ENCODE measurements at regions of chr20 and their contacts with region 1.

Region 1: DNA sequence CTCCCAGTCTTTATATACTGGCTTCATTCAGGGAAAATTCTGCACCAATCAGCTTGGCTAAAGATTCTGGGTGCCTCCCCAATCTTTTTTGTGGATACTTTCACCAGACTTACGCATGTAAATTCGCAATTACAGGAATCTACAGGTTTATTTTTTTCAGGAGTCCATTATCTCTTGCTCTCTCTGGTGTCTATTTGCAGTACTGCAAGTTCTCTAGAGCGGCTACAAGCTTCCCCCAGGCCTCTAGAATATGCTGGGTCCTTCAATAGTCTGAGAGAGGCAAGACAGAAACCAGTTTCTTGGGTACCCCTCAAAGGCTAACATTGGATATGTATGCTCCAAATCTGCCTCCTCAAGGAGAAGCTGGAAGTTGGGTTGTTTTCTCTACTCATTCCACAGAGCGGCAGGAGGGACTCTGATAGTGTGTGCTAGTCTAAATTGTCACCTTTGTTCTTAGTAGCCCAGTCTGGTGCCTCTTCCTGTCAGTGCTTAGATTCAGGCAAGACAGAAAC is 58.5 kb downstream of the SUN5 start:
- DNase-seq: peak; percentile 59
- ATAC-seq: peak; percentile 95
- H3K4me3 Mint-ChIP-seq: peak overlapping the region; percentile 37
- H3K27ac Mint-ChIP-seq: peak overlapping the region; percentile 86
- H3K4me1 Mint-ChIP-seq: peaks cover 31% of the 10 kb centered on the region
- H3K27me3 Mint-ChIP-seq: no peaks in the 10 kb centered on the region

Region 2: GRCh38 chr20:32789896-32790750 is 155.6 kb before region 1 on chr20:
- CTCF ChIA-PET with region 1: interaction called, 15 read pairs
- POLR2A ChIA-PET with region 1: no interaction called
- DNase-seq: peak; percentile 79
- ATAC-seq: peak; percentile 80
- H3K4me3 Mint-ChIP-seq: no peak overlapping the region
- H3K27ac Mint-ChIP-seq: no peak overlapping the region
- H3K4me1 Mint-ChIP-seq: peaks cover 24% of the 10 kb centered on the region
- H3K27me3 Mint-ChIP-seq: no peaks in the 10 kb centered on the region

Region 3: GRCh38 chr20:32902456-32903420 is 43.0 kb before region 1 on chr20:
- CTCF ChIA-PET with region 1: interaction called, 41 read pairs
- POLR2A ChIA-PET with region 1: no interaction called
- DNase-seq: peak; percentile 81
- ATAC-seq: peak; percentile 78
- H3K4me3 Mint-ChIP-seq: no peak overlapping the region
- H3K27ac Mint-ChIP-seq: peak overlapping the region; percentile 74
- H3K4me1 Mint-ChIP-seq: peaks cover 36% of the 10 kb centered on the region
- H3K27me3 Mint-ChIP-seq: no peaks in the 10 kb centered on the region

Region 4: GRCh38 chr20:32920530-32921298 is 25.1 kb before region 1 on chr20:
- CTCF ChIA-PET with region 1: interaction called, 14 read pairs
- POLR2A ChIA-PET with region 1: no interaction called
- DNase-seq: no peak
- ATAC-seq: no peak
- H3K4me3 Mint-ChIP-seq: no peak overlapping the region
- H3K27ac Mint-ChIP-seq: no peak overlapping the region
- H3K4me1 Mint-ChIP-seq: no peaks in the 10 kb centered on the region
- H3K27me3 Mint-ChIP-seq: no peaks in the 10 kb centered on the region

Region 5: DNA sequence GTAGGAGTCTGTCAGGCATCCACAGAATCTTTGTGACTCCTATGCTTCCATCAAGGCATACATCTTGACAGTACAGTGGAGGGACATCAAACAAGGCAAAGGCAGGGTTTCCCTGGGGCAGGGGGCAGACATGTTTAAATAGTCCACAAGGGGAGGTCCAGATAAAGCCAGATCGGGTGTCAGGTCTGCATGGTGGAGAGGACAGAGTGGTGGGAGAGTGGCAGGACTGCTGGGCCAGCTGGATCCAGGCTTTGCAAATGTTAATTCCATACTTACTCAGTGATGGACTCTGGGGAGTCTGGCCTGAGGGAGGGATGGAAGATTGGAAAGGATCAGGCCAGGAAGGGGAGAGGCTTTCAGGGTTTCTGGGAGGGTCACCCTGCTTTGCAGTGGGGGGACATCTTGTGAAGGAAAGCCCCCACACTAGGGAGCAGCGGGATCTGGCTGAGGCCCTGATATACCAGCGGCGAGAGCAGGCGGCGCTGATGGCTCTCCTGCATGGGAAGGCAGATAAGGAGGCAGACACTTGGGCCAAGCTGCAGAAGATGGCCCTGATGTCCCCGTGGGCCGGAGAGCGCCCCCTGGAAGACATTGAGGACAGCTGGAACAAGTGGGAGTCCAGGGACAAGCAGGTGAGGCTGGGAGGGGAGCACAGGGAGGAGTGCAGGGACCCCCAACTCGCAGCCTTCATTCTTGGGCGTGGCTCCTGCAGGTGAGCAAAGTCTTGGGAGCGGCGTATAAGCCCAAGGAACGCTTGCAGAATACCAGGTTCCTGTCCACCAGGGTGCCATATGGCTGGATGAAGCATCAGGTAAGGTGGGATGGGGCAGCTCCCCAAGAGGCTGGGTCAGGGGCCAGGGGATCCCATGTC is 13.8 kb after region 1 on chr20:
- CTCF ChIA-PET with region 1: interaction called, 71 read pairs
- POLR2A ChIA-PET with region 1: no interaction called
- DNase-seq: no peak
- ATAC-seq: no peak
- H3K4me3 Mint-ChIP-seq: no peak overlapping the region
- H3K27ac Mint-ChIP-seq: no peak overlapping the region
- H3K4me1 Mint-ChIP-seq: peaks cover 32% of the 10 kb centered on the region
- H3K27me3 Mint-ChIP-seq: no peaks in the 10 kb centered on the region

Region 6: DNA sequence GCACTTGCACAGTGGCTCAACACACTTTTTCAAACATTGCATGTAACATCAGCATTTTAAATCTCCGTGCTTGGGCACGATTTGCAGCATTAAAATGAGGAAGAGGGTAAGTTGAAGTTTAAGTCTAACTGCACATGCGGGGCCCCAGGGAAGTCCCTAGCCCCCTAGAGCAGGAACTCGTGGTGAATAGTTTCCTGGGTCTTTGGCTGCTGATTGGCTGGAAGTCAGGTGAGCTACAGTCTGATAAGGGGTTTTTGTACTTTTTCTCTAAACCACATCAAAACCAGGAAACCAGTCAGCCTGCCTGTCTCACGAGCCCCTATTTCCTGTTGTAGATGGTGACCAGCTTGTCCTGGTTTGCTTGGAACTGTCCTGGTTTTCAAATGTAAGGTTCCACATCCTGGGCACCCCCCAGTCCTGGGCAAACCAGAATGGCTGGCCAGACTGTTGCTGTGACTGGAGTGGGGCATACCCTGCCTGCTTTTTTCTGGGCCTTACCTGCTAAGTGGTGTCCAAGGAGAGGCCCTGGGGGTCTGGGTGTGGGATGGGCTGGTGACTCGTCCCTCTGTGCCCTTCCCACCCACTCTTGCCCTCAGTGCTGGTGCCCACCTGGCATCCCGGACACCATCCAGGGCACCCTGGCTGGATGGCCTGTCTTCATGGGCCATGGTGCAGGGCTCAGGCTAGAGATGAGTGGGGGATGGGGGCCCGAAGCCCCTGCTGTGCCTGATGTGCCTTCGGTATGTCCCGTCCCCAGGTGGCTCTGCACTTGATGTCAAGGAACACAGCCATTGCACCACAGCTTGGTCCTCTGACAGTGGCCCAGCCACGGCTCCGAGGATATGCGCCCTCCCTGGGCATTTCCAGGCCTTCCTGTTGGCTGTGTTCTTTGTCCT is 26.7 kb after region 1 on chr20:
- CTCF ChIA-PET with region 1: interaction called, 71 read pairs
- POLR2A ChIA-PET with region 1: interaction called, 26 read pairs
- DNase-seq: peak; percentile 93
- ATAC-seq: peak; percentile 85
- H3K4me3 Mint-ChIP-seq: peak overlapping the region; percentile 40
- H3K27ac Mint-ChIP-seq: no peak overlapping the region
- H3K4me1 Mint-ChIP-seq: peaks cover 47% of the 10 kb centered on the region
- H3K27me3 Mint-ChIP-seq: no peaks in the 10 kb centered on the region

Region 7: DNA sequence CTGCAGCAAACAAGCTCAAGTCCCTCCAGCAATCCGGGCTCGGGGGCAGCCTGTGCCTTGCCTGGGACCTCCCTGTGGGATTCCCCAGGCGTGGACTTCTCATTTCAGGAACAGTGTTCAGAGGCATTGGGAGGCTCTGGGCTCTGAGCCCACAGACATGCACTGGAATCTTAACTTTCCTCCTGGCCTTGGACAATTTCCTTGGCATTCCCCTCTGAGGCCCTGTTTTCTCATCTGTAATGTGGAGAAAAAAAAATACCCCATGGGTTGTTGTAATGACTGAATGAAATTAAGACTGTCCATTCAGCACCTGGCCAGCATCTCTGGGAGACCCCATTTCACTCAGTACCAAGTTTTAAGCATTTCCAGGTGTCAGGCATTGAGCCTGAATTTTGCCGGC is 151.2 kb after region 1 on chr20:
- CTCF ChIA-PET with region 1: interaction called, 15 read pairs
- POLR2A ChIA-PET with region 1: no interaction called
- DNase-seq: no peak
- ATAC-seq: no peak
- H3K4me3 Mint-ChIP-seq: no peak overlapping the region
- H3K27ac Mint-ChIP-seq: no peak overlapping the region
- H3K4me1 Mint-ChIP-seq: no peaks in the 10 kb centered on the region
- H3K27me3 Mint-ChIP-seq: peaks cover 3% of the 10 kb centered on the region